Posterior cingulate gyrus (tissue), 11 donors: ENCODE measurements at regions of chr2 and their contacts with region 1.

Region 1: DNA sequence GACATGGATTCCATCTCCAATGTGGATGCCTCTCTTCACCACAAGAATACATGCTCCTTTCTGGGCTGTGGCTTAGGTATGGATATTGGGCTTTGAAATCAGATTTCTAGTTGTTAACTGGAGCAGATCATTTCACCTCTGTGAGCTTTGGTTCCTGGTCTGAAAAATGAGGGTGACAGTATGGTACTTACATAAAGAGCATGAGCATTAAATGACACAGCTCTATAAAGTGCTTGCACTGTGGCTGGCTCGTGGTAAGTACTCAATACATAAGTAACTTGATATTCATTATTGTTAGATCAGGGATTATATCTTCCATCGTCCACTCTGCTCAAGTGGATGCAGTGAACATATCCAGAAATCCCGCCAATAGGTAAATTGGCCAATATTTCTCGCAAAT is 33.4 kb downstream of the ARHGAP25 start:
- DNase-seq: no peak

Region 2: DNA sequence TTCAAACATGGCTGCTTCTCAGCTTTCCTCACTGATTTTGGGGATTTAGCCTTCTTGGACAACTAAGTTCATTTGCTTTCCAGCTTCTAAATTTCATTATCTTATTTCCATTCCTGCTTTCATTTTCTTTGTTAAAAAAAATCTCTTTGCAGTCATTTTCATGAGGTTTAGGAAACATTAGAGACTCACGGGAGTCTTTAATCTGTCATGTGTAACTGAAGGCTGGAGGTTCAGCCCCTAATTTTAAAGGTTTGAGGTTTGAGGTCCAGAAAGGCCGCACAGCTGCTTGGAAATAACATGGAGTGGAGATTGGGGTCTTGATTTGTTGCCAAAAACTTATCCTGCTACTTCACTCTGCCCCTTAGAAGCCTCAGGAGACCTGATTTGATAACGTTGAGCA is 94.4 kb before region 1 on chr2:
- intact Hi-C with region 1: no loop called
- DNase-seq: no peak

Region 3: DNA sequence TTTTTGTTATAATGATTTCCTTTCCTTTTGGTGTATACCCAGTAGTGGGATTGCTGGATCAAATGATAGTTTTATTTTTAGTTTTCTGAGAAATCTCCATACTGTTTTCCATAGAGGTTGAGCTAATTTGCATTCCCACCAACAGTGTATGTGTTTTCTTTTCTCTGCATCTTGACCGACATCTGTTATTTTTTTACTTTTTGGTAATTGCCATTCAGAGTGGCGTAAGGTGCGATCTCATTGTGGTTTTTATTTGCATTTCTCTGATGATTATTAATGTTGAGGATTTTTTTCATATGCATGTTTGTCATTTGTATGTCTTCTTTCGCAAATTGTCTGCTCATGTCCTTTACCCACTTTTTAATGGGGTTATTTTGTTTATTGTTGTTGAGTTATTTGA is 24.8 kb after region 1 on chr2:
- intact Hi-C with region 1: loop called (anchors 1 kb)
- DNase-seq: no peak